Mammary epithelial cell (primary cell): ENCODE measurements at regions of chr9 and their contacts with region 1.

Region 1: DNA sequence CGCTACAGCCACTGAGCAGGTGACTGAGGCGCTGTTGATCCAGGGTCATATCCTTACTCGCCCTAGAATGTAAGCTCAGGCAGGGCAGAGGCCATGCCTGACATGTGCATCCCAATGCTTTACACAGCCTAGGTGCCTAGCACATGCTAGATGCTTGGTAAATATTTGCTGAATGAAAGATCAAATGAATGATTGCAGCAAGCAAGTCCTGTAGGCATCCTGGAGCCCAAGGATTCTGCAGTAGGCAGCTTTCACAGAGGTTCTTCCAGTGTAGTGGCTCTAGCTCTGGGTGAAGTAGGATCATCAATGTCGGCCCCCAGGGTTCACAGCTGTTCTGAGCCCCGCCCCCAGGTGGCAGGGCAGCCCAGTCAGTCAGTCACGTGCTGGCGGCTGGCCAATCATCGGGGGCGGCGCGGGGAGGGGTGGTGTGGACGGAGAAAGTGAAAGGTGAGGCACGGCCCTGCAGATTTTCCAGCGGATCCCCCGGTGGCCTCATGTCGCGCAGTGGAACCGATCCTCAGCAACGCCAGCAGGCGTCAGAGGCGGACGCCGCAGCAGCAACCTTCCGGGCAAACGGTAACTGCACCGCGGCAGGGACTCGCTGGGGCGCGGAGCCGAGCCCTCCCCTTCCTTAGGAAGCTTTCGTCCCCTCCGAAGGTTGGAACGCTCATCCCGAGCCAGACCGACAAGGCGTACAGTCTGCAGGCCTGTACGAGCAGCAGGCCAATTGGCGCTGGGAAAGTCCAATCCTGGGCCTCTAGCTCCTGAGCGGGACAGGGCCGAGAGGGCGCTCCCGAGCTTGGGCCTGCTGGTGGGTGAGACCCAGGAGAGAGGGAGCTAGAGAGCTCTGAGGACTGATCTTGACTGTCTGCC is at the start of gene GALT:
- DNase-seq: peak; percentile 85
- H3K4me3 ChIP-seq: peak within 1 kb of the TSS; percentile 70 to 88 (median 75)
- H3K27ac ChIP-seq: peak within 1 kb of the TSS; percentile 59
- H3K4me1 ChIP-seq: peaks cover 14% of the 10 kb centered on the region
- H3K27me3 ChIP-seq: no peaks in the 10 kb centered on the region
- CTCF ChIP-seq: peak; percentile 10 to 49
- total RNA-seq, gene GALT: 29.5 to 30.2 TPM

Region 2: DNA sequence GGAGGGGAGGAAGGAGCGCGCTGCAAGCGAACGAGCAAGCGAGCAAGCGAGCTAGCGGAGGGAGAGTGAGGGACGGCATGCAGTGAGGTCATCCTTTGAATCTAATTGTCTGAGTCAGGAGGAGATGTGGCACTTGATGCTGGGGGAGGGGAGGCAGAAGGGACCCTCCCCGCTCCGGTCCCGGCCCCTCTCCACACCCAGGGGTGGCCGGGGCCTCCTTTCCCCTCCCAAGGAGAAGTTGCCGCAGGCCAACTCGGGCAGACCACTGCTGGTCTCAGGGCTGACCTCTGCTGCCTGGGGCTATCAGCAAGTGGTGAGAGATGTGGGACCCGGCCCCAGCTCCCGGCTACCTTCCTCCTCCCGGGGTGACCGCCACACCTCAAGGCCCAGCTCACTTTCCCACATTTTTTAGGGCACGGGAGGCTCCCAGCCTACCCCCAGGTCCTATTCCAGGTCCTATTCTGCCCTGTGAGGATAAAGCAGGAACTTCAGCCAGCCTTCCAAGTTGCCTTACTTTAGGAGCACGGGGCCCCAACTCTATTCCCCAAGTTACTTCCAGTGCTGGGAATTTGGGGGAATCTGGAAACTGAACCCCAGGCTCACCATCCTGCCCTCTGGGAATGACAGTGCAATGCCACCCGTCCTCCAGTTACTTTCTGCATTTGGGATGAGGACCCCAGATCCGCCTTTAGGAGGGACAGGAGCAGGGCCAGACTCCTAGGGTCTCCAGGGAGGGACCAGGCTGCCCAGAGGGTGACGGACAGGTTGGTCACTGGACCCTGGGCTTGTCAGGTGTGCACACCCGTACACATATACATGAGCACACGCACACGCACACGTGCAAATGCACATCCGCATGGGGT is 68.0 kb before region 1 on chr9:
- CTCF ChIA-PET with region 1: no interaction called
- dilution Hi-C with region 1: loop called (anchors 10 kb)
- in situ Hi-C with region 1: no loop called
- intact Hi-C with region 1: no loop called
- DNase-seq: no peak
- H3K4me3 ChIP-seq: no peak overlapping the region
- H3K27ac ChIP-seq: no peak overlapping the region
- H3K4me1 ChIP-seq: no peaks in the 10 kb centered on the region
- H3K27me3 ChIP-seq: peaks cover 15% of the 10 kb centered on the region
- CTCF ChIP-seq: no peak

Region 3: GRCh38 chr9:35306283-35306682 is 659.8 kb after region 1 on chr9:
- CTCF ChIA-PET with region 1: no interaction called
- dilution Hi-C with region 1: no loop called
- in situ Hi-C with region 1: no loop called
- intact Hi-C with region 1: no loop called
- DNase-seq: no peak
- H3K4me3 ChIP-seq: no peak overlapping the region
- H3K27ac ChIP-seq: no peak overlapping the region
- H3K4me1 ChIP-seq: no peaks in the 10 kb centered on the region
- H3K27me3 ChIP-seq: no peaks in the 10 kb centered on the region
- CTCF ChIP-seq: no peak